Sigmoid colon (tissue), 7 donors: ENCODE measurements at regions of chr3 and their contacts with region 1.

Region 1: GRCh38 chr3:16600780-16601539 is 4.3 kb downstream of the DAZL start:
- DNase-seq: peak; percentile 89
- H3K4me3 ChIP-seq: no peak overlapping the region
- H3K27ac ChIP-seq: no peak overlapping the region
- H3K4me1 ChIP-seq: peaks cover 0 to 4% (median 0%) of the 10 kb centered on the region in 4 donors
- H3K27me3 ChIP-seq: no peaks in the 10 kb centered on the region
- CTCF ChIP-seq: peak; percentile 53 to 79 (median 71)
- EP300 ChIP-seq: no peak
- POLR2A ChIP-seq: no peak

Region 2: DNA sequence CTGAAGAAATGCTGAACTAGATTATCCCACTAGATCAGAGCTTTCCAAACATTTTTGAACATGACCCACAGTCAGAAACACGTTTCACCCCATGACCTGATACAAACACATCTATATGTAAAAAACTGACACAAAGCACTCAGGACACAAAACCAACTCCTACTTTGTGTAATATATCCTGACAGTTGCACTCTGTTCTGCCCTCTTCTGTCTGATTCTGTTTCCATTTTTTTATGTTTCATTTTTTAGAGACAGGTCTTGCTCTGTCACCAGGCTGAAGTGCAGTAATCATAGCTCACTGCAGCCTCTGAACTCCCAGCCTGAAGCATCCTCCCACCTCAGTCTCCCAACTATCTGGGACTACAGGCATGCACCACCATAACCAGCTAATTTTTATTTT is 71.7 kb before region 1 on chr3:
- intact Hi-C with region 1: no loop called
- DNase-seq: no peak
- H3K4me3 ChIP-seq: no peak overlapping the region
- H3K27ac ChIP-seq: no peak overlapping the region
- H3K4me1 ChIP-seq: no peaks in the 10 kb centered on the region
- H3K27me3 ChIP-seq: no peaks in the 10 kb centered on the region
- CTCF ChIP-seq: no peak
- EP300 ChIP-seq: no peak
- POLR2A ChIP-seq: no peak

Region 3: DNA sequence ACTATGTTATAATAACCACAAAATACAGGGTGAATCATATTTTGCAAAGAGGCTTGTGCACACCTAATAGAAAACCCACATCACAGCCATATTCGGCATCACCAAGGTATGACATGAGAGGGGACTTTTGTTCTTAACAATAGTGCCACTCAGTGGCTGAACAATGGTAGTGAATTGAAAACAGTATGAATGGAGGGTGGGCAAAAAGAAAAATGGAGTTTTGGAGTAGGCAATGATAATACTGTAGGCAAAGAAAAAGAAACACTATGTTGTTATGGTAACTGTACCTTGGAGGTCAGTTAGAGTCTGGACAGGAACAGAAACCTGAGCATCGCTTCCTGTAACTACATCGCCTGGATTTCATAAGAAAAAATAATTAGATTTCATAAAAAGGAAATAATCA is 632.4 kb after region 1 on chr3:
- intact Hi-C with region 1: loop called (anchors 5 kb)
- DNase-seq: no peak
- H3K4me3 ChIP-seq: no peak overlapping the region
- H3K27ac ChIP-seq: no peak overlapping the region
- H3K4me1 ChIP-seq: peaks cover 0 to 7% (median 0%) of the 10 kb centered on the region in 4 donors
- H3K27me3 ChIP-seq: no peaks in the 10 kb centered on the region
- CTCF ChIP-seq: peak; percentile 41 to 60 (median 49)
- EP300 ChIP-seq: no peak
- POLR2A ChIP-seq: no peak

Region 4: DNA sequence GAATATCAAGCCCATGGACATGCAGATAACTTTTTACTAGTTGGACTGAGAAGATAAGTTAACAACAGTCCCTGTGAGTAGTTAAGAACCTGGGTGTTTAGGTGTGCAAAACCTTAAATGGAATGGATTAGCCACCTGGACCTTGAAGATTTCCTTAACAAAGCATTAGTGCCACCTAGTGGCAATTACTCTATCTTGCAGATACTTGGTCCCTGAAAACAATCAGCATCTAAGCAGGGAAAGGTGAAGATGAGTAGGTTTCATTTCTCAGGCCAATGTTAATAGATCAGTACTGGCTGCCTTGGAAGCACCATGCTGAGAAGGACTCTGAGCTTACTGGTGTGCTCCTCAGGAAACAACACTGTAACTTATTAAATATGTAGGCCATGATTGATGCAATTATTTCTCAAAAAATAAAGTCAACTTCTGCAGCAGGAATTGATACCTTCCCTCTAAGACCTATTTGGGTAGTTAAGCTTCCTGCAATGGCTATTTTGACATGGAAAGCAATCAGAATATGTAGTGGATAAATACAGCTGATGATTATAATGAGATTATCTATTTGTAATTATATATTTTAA is 812.1 kb after region 1 on chr3:
- intact Hi-C with region 1: loop called (anchors 5 kb)
- DNase-seq: no peak
- H3K4me3 ChIP-seq: no peak overlapping the region
- H3K27ac ChIP-seq: no peak overlapping the region
- H3K4me1 ChIP-seq: no peaks in the 10 kb centered on the region
- H3K27me3 ChIP-seq: no peaks in the 10 kb centered on the region
- CTCF ChIP-seq: peak; percentile 13 to 70 (median 60)
- EP300 ChIP-seq: no peak
- POLR2A ChIP-seq: no peak